ENCODE measurements at regions of chr3 and their contacts with region 1.

Region 1: DNA sequence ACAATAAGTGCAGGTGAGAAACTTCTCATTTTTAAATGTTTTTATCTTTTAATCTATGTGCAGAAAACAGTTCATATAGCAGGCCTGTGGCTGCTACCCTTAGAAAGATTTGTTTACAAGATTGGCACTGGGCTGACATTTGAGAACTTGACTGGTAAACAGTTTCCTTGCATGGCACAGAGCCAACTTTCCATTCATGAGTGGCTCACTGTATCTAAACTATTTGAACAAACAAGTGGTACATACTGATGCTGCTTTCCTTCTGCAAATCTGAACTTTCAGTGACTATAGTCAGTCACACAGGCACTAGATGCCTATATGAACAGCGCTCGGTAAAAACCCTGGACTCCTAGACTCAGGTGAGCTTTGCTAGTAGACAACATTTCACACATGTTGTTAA is 6.3 kb upstream of the GTPBP8 start:
- DNase-seq: no peak
- ATAC-seq: peak in 1 of 8 donors; percentile 44
- H3K4me3 ChIP-seq: no peak overlapping the region
- H3K27ac ChIP-seq: no peak overlapping the region
- H3K4me1 ChIP-seq: peaks cover 0 to 10% (median 0%) of the 10 kb centered on the region in 9 donors
- H3K27me3 ChIP-seq: no peaks in the 10 kb centered on the region
- CTCF ChIP-seq: no peak

Region 2: GRCh38 chr3:112303764-112304325 is 680.6 kb before region 1 on chr3:
- intact Hi-C with region 1: loop called in 1 of 10 experiments (anchors 10 kb)
- DNase-seq: no peak
- ATAC-seq: peak in 7 of 8 donors; percentile 48 to 70 (median 63)
- H3K4me3 ChIP-seq: peak overlapping the region; percentile 16 to 59 (median 50)
- H3K27ac ChIP-seq: peak overlapping the region in 4 of 10 donors; percentile 17 to 63 (median 40)
- H3K4me1 ChIP-seq: peaks cover 0 to 34% (median 19%) of the 10 kb centered on the region in 9 donors
- H3K27me3 ChIP-seq: no peaks in the 10 kb centered on the region
- CTCF ChIP-seq: no peak

Region 3: GRCh38 chr3:112582244-112582874 is 402.1 kb before region 1 on chr3:
- intact Hi-C with region 1: loop called in 9 of 10 experiments (anchors 2 to 10 kb)
- DNase-seq: peak in 1 of 2 donors; percentile 19
- ATAC-seq: no peak
- H3K4me3 ChIP-seq: no peak overlapping the region
- H3K27ac ChIP-seq: no peak overlapping the region
- H3K4me1 ChIP-seq: peaks cover 0 to 16% (median 0%) of the 10 kb centered on the region in 9 donors
- H3K27me3 ChIP-seq: no peaks in the 10 kb centered on the region
- CTCF ChIP-seq: peak; percentile 25 to 76 (median 66)

Region 4: GRCh38 chr3:112734718-112735350 is 249.7 kb before region 1 on chr3:
- intact Hi-C with region 1: loop called in 8 of 10 experiments (anchors 2 to 10 kb)
- DNase-seq: peak in 1 of 2 donors; percentile 62
- ATAC-seq: peak in 6 of 8 donors; percentile 46 to 75 (median 72)
- H3K4me3 ChIP-seq: no peak overlapping the region
- H3K27ac ChIP-seq: no peak overlapping the region
- H3K4me1 ChIP-seq: peaks cover 0 to 27% (median 0%) of the 10 kb centered on the region in 9 donors
- H3K27me3 ChIP-seq: peaks cover 0 to 6% (median 0%) of the 10 kb centered on the region in 7 donors
- CTCF ChIP-seq: peak; percentile 32 to 78 (median 65)